Mammary epithelial cell (primary cell): ENCODE measurements at regions of chr5 and their contacts with region 1.

Region 1: GRCh38 chr5:1011226-1011631 is 2.6 kb downstream of the NKD2 start:
- DNase-seq: no peak
- H3K4me3 ChIP-seq: no peak overlapping the region
- H3K27ac ChIP-seq: no peak overlapping the region
- H3K4me1 ChIP-seq: peaks cover 13% of the 10 kb centered on the region
- H3K27me3 ChIP-seq: peaks cover 27% of the 10 kb centered on the region
- CTCF ChIP-seq: peak; percentile 54 to 60

Region 2: GRCh38 chr5:980001-980588 is 31.1 kb before region 1 on chr5:
- CTCF ChIA-PET with region 1: interaction called, 7 read pairs
- dilution Hi-C with region 1: no loop called
- in situ Hi-C with region 1: no loop called
- intact Hi-C with region 1: loop called (anchors 2 kb)
- DNase-seq: peak; percentile 62
- H3K4me3 ChIP-seq: peak overlapping the region in 1 of 3 experiments; percentile 14
- H3K27ac ChIP-seq: peak overlapping the region; percentile 71
- H3K4me1 ChIP-seq: peaks cover 21% of the 10 kb centered on the region
- H3K27me3 ChIP-seq: no peaks in the 10 kb centered on the region
- CTCF ChIP-seq: no peak